IMR-90 (cell line): ENCODE measurements at regions of chr5 and their contacts with region 1.

Region 1: DNA sequence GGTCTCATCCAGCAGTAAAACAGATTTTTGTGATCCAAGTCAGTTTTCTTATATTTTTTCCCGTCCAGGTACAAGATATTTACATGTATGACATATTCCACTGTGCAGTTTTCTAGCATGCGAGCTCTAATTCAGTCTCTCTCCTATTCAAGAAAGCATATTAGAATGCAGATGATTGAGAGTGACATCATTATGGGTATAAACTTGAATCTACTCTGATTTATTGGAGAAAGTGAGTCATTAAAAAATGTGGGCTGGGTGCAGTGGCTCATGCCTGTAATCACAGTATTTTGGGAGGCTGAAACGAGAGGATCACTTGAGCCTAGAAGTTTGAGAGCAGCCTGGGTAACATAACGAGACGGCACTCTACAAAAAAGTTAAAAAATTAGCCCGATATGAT is 6.2 kb downstream of the FER start:
- DNase-seq: peak; percentile 72
- ATAC-seq: peak; percentile 9; the same call in 1 of the 2 replicates
- H3K4me3 ChIP-seq: no peak overlapping the region
- H3K27ac ChIP-seq: no peak overlapping the region
- H3K4me1 ChIP-seq: peaks cover 2% of the 10 kb centered on the region; the same call in 1 of the 2 replicates
- H3K27me3 ChIP-seq: no peaks in the 10 kb centered on the region
- CTCF ChIP-seq: no peak
- POLR2A ChIP-seq: no peak
- RAD21 ChIP-seq: no peak

Region 2: DNA sequence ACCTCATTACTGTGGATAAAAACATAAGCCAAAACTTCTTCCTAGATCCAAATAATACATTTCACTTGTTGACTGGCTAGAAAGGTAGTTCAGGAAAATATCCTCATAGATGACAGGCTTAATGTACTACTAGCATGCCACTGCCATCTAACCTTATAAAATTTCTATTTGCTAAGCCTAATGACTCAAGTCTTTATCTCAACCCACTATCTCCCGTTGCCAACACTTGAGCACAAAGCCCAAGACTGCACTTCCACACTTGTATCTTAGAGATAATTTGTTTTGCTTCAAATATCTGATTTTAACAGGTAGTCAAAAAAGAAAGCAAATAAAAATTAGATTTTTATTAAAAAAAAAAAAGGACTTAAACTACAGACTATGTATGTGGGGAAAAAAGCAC is 414.6 kb before region 1 on chr5:
- CTCF ChIA-PET with region 1: no interaction called
- POLR2A ChIA-PET with region 1: no interaction called
- dilution Hi-C with region 1: no loop called
- in situ Hi-C with region 1: no loop called
- intact Hi-C with region 1: no loop called
- DNase-seq: no peak
- ATAC-seq: no peak
- H3K4me3 ChIP-seq: no peak overlapping the region
- H3K27ac ChIP-seq: no peak overlapping the region
- H3K4me1 ChIP-seq: no peaks in the 10 kb centered on the region
- H3K27me3 ChIP-seq: no peaks in the 10 kb centered on the region
- CTCF ChIP-seq: no peak
- POLR2A ChIP-seq: no peak
- RAD21 ChIP-seq: no peak

Region 3: DNA sequence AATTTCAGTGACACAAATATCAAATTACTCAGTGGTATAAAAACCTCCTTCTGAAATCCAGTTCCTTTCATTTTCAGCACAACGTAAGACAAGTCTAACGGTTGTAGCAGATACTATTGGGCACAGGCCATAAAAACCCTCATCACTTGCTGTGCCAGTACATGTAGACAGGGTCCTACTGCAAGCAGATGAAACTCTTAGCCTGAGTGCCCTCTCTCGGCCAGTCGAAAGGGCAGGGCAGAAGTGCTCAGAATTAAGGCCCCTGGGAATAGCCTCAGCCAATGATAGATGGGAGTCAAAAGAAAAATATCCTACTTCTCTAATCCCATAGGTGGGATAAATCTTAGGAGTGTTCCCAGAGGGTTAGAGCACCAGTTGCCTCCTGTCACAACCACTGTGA is 174.6 kb before region 1 on chr5:
- CTCF ChIA-PET with region 1: no interaction called
- POLR2A ChIA-PET with region 1: no interaction called
- dilution Hi-C with region 1: no loop called
- in situ Hi-C with region 1: no loop called
- intact Hi-C with region 1: no loop called
- DNase-seq: no peak
- ATAC-seq: no peak; the same call in none of the 2 replicates
- H3K4me3 ChIP-seq: no peak overlapping the region
- H3K27ac ChIP-seq: no peak overlapping the region
- H3K4me1 ChIP-seq: no peaks in the 10 kb centered on the region
- H3K27me3 ChIP-seq: peaks cover 3% of the 10 kb centered on the region; the same call in 1 of the 2 replicates
- CTCF ChIP-seq: no peak
- POLR2A ChIP-seq: no peak
- RAD21 ChIP-seq: no peak

Region 4: DNA sequence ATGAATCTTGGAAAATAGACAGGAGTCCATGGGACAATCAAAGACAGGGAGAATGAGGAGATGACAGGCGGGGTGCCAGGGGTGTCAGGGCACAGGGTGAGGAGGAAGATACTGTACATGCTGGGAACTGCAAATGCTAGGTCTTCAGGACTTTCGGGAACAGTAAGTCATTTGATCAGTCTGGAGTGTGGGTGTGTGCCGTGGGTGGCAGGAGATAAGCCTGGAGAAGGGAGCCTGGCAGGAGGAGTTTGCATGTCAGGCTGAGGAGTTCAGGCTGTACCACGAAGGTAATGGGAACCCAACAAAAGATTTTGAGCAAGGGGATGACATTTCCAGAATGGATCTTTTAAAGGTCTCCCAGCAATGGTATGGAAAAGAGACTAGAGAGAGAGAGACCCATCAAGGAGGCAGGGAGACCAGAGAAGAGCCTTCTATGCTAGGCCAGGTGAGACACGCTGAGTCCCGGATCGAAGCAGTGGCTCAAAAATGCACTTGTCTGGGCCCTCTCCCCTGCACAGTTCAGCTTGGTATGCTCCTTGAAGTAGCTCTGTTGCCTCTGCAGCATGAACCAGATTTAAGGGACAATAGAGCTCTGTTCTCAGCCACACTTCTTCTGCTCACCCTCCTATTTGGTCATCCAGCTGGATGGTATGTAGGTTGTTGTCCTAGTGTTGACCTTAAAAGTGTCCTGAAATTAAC is 83.1 kb before region 1 on chr5:
- CTCF ChIA-PET with region 1: no interaction called
- POLR2A ChIA-PET with region 1: no interaction called
- dilution Hi-C with region 1: no loop called
- in situ Hi-C with region 1: no loop called
- intact Hi-C with region 1: no loop called
- DNase-seq: no peak
- ATAC-seq: no peak
- H3K4me3 ChIP-seq: no peak overlapping the region
- H3K27ac ChIP-seq: no peak overlapping the region
- H3K4me1 ChIP-seq: no peaks in the 10 kb centered on the region
- H3K27me3 ChIP-seq: peaks cover 4% of the 10 kb centered on the region; the same call in 1 of the 2 replicates
- CTCF ChIP-seq: no peak
- POLR2A ChIP-seq: no peak
- RAD21 ChIP-seq: no peak

Region 5: GRCh38 chr5:108769352-108769751 is 15.5 kb after region 1 on chr5:
- CTCF ChIA-PET with region 1: interaction called, 3 read pairs
- POLR2A ChIA-PET with region 1: no interaction called
- dilution Hi-C with region 1: no loop called
- in situ Hi-C with region 1: no loop called
- intact Hi-C with region 1: loop called (anchors 2 kb)
- DNase-seq: no peak
- ATAC-seq: peak; percentile 49
- H3K4me3 ChIP-seq: no peak overlapping the region
- H3K27ac ChIP-seq: no peak overlapping the region
- H3K4me1 ChIP-seq: peaks cover 2% of the 10 kb centered on the region; the same call in 1 of the 2 replicates
- H3K27me3 ChIP-seq: no peaks in the 10 kb centered on the region
- CTCF ChIP-seq: no peak
- POLR2A ChIP-seq: no peak
- RAD21 ChIP-seq: no peak